WTC11 (cell line): ENCODE measurements at regions of chr11 and their contacts with region 1.

Region 1: GRCh38 chr11:12288212-12288930 is 89.0 kb upstream of the PARVA start:
- DNase-seq: peak; percentile 95
- ATAC-seq: peak; percentile 69
- H3K4me3 Mint-ChIP-seq: no peak overlapping the region
- H3K27ac Mint-ChIP-seq: no peak overlapping the region
- H3K4me1 Mint-ChIP-seq: peaks cover 15% of the 10 kb centered on the region
- H3K27me3 Mint-ChIP-seq: no peaks in the 10 kb centered on the region
- CTCF ChIP-seq: peak; percentile 89

Region 2: GRCh38 chr11:12052676-12053605 is 235.4 kb before region 1 on chr11:
- CTCF ChIA-PET with region 1: interaction called, 47 read pairs
- POLR2A ChIA-PET with region 1: no interaction called
- DNase-seq: peak; percentile 42
- ATAC-seq: peak; percentile 77
- H3K4me3 Mint-ChIP-seq: no peak overlapping the region
- H3K27ac Mint-ChIP-seq: no peak overlapping the region
- H3K4me1 Mint-ChIP-seq: peaks cover 8% of the 10 kb centered on the region; the same call in 1 of the 2 replicates
- H3K27me3 Mint-ChIP-seq: no peaks in the 10 kb centered on the region
- CTCF ChIP-seq: 0 out of 2 replicates have a peak, but pooled peaks have one; percentile 21

Region 3: GRCh38 chr11:12243486-12243885 is 44.9 kb before region 1 on chr11:
- CTCF ChIA-PET with region 1: interaction called, 11 read pairs
- POLR2A ChIA-PET with region 1: no interaction called
- DNase-seq: no peak
- ATAC-seq: no peak
- H3K4me3 Mint-ChIP-seq: no peak overlapping the region
- H3K27ac Mint-ChIP-seq: no peak overlapping the region
- H3K4me1 Mint-ChIP-seq: peaks cover 36% of the 10 kb centered on the region
- H3K27me3 Mint-ChIP-seq: no peaks in the 10 kb centered on the region
- CTCF ChIP-seq: no peak

Region 4: DNA sequence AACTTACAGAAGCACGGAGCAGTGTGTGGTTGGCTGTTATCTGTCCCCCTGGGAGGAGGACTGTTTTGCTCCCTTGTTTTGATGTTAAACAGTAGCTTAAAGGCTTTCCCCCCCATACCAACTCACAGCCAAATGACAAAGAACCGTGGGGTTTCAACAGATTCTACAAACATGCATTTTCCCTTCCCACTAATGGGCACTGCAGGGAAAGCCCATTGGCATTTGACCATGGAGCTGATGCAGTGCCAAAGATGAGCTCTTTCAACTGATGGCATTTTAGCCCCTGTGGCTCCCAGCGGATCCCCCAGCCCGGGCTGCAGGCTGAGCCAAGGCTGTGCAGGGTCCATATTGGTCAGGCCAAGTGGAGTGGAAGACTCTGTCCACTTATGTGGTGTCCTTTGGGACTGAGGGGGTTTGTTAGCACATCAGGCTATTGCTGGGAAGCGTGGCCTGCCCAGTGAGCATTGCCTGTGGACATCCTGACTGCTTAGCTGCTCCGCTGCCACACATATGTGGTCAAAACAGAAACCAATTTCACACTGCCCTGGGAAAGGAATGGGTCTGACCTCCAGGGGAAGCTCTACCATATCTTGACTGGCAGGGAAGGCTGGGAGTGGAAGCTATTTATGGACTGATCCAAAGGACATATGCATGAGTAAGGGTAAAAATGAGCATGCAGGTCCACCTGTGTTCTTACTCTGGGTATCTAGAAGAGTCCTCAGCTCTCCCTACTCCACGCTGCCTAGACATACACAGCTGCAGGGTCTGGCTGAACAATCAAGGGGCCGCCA is 27.4 kb before region 1 on chr11:
- CTCF ChIA-PET with region 1: no interaction called
- POLR2A ChIA-PET with region 1: no interaction called
- DNase-seq: no peak
- ATAC-seq: no peak
- H3K4me3 Mint-ChIP-seq: no peak overlapping the region
- H3K27ac Mint-ChIP-seq: no peak overlapping the region
- H3K4me1 Mint-ChIP-seq: peaks cover 6% of the 10 kb centered on the region
- H3K27me3 Mint-ChIP-seq: no peaks in the 10 kb centered on the region; the same call in 1 of the 2 replicates
- CTCF ChIP-seq: no peak

Region 5: GRCh38 chr11:12318791-12319438 is 30.5 kb after region 1 on chr11:
- CTCF ChIA-PET with region 1: interaction called, 41 read pairs
- POLR2A ChIA-PET with region 1: no interaction called
- DNase-seq: no peak
- ATAC-seq: no peak
- H3K4me3 Mint-ChIP-seq: no peak overlapping the region
- H3K27ac Mint-ChIP-seq: no peak overlapping the region
- H3K4me1 Mint-ChIP-seq: peaks cover 27% of the 10 kb centered on the region
- H3K27me3 Mint-ChIP-seq: no peaks in the 10 kb centered on the region
- CTCF ChIP-seq: no peak

Region 6: GRCh38 chr11:12377824-12378593 is 89.6 kb after region 1 on chr11:
- CTCF ChIA-PET with region 1: interaction called, 18 read pairs
- POLR2A ChIA-PET with region 1: interaction called, 5 read pairs
- DNase-seq: peak; percentile 82
- ATAC-seq: peak; percentile 82
- H3K4me3 Mint-ChIP-seq: peak overlapping the region; percentile 94
- H3K27ac Mint-ChIP-seq: peak overlapping the region; percentile 100
- H3K4me1 Mint-ChIP-seq: peaks cover 23% of the 10 kb centered on the region
- H3K27me3 Mint-ChIP-seq: peaks cover 29% of the 10 kb centered on the region
- CTCF ChIP-seq: no peak

Region 7: DNA sequence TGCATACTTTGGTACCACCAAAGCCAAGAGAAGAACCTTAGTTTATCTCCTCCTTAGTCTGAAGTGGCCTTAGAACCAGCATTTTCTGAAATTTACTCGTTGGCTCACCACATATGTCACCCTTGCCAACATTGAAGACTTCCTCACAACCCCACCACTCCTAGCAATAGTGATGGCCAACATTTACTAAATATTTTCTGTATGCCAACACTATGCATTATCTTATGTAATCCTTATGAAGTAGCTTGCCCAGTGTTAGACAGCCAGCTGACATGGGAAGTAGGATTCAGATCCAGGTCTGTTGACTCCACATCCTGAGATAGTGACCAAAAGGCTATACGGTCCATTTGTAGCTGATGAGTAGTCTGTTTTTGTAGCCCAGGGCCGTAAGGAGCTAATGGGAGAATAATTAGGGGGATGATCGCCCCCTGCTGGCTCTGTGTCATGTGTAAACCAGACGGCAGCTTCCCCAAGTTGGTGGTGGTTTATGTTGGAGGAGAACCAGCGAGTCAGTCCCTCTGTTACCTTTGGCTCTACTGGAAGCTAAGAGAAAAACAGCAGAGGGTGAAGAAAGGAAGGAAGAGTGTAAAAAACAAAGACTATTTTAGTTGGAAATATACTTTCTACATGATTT is 600.3 kb after region 1 on chr11:
- CTCF ChIA-PET with region 1: interaction called, 24 read pairs
- POLR2A ChIA-PET with region 1: no interaction called
- DNase-seq: peak; percentile 85
- ATAC-seq: peak; percentile 82
- H3K4me3 Mint-ChIP-seq: no peak overlapping the region
- H3K27ac Mint-ChIP-seq: peak overlapping the region; percentile 47; the same call in 1 of the 2 replicates
- H3K4me1 Mint-ChIP-seq: peaks cover 20% of the 10 kb centered on the region
- H3K27me3 Mint-ChIP-seq: no peaks in the 10 kb centered on the region
- CTCF ChIP-seq: peak; percentile 57

Region 8: DNA sequence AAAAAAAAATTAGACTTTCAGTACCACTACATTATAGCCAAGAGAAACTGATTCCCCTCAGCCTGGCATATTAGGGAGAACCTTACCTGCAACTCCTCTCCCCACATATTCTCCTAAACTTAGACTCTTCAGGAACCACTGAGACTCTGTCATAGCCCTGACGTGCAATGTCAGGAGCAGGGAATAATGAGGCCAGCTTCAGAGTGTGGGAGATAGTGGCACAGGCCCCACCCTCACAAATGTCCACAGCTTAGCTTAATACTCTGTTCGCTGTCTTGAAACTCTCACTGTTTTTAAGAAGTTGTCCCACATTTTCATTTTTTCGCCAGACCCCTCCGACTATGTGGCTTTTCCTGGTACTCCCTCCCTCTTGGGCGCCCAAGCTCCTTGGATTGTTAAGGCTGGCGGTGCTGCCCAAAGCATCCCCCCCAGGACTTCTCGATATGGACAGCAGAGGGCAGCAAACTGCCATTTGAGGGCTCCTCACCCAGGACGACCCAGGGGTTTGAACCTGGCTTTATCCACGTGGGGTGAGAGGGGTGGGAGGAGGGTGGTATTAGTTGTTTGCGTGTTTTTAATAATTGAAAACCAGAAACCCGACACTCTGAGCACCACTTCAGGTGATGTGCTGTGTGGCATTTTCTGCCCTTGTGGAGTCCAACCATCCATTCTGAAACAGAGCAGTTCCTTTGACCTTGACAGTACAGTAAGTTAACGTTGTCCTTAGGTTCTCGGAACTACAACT is 675.6 kb after region 1 on chr11:
- CTCF ChIA-PET with region 1: interaction called, 25 read pairs
- POLR2A ChIA-PET with region 1: interaction called, 3 read pairs
- DNase-seq: peak; percentile 88
- ATAC-seq: peak; percentile 98
- H3K4me3 Mint-ChIP-seq: no peak overlapping the region
- H3K27ac Mint-ChIP-seq: no peak overlapping the region
- H3K4me1 Mint-ChIP-seq: peaks cover 11% of the 10 kb centered on the region; the same call in 1 of the 2 replicates
- H3K27me3 Mint-ChIP-seq: peaks cover 8% of the 10 kb centered on the region
- CTCF ChIP-seq: peak; percentile 78